GM18951 (cell line): ENCODE measurements at regions of chr2 and their contacts with region 1.

Region 1: DNA sequence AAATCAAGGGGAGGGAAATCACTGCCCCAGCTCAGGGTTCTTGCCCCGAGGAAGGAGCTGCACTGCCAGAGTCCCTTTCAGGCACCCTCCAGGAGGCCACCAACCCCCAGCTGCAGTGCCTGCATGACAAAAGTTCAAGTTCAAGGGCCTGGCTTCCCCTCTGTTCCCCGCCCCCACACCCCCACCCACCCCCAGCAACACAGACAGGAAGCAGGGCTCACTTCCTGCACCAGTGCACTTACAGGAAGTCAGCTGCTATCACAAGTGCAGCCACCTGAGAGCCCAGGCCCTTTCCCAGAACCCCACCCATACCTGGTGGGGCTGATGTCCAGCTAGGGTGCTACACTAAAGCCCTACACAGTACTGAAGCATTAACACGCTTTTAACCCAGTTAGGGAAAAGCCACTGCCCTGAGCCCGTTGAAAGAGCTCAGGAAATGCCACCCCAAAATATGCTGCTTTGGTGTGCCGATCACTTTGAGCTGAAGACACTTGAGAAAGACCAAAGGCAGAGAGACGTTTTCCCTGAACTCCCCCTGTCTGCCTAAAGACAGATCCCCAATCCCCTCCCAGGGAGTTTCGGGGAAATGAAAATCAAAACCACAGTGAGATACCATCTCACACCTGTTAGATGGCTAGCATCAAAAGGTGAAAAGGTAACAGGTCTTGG is 109.9 kb upstream of the CAB39 start:
- POLR2A ChIP-seq: peak; percentile 35

Region 2: DNA sequence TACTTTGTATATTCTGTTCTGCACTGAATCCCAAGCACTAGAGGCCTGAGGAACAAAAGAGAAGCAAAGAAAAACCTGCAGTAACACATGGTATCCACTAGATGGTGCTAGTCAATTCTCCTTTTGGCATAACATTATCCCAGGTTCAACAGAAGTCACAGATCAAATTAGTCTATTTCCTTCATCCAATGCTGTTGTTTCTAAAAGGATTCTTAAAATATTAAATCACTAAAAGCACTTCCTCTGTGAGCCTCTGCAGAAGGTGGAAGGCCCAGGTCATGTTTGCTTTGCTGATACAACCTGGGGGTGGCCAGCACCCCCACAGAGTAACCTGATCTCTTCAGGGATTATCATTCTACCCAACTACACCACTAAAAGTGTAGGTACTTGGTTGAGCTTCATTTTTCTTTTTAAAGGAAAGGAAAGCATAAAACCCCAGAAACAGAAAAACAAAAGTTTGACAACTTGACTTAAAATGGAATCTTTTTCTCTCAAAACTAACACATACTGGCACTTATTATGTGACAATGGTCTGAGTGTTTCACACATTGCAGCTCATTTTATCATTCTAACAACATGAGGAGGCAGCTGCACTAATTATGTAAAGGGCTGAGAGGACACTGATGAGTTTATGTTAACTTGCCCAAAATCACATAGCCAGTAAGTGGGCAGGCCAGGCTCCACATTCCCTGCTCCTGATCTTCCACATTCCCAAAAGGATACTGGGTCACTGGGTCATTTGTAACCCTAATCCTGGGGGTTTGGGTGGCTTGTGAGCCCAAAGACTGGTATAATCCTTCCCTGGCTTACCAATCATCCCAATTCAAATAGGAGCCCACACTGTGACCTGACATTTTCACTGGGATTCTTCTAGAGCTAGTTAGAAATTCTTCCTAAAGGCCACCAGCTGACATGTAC is 821.6 kb before region 1 on chr2:
- in situ Hi-C with region 1: loop called (anchors 25 kb)
- POLR2A ChIP-seq: no peak

Region 3: GRCh38 chr2:230219419-230220331 is 383.0 kb before region 1 on chr2 and contains the start of gene SP110:
- in situ Hi-C with region 1: loop called (anchors 25 kb)
- POLR2A ChIP-seq: peak; percentile 64

Region 4: DNA sequence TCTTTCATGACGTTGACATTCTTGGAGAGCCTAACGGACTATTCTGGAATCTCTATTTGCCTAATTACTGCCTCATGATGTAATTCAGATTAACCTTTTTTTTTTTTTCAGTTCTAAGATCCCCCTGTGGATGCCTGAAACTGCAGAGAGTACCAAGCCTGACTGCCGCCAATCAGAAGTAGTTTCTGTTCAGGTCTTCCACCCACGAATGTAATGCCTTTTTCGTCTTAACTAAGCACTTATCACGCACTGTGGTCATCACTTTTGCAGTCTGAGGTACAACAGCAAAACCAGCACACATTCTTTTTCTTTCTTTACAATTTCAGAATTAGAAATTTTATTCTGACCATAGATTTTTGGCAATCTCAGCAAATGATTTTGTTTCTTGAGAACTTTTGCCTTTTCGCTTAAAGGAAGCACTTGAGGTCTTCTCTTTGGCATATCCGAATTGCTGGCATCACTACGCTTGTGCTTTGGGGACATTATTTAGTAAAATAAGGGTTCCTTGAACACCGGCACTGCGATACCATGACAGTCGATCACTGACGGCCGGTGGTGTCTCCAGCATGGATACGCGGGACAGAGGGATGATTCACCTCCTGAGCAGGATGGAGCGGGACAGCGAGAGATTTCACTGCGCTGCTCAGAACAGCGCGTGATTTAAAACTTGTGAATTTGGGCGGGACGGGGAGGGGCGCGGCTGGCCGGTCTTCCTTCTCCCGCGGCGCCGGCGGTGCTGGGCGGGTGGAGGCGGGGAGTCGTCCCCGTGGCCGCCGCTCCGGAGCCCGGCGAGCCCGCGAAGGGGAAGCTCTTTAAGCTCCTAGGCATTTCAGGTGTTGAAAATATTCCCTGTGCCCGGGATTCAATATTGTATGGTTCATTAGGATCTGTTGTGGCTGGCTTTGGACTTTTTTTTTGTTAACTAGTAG is 354.4 kb after region 1 on chr2:
- in situ Hi-C with region 1: no loop called
- POLR2A ChIP-seq: peak; percentile 53